Colonic mucosa (tissue), 4 donors: ENCODE measurements at regions of chr7 and their contacts with region 1.

Region 1: GRCh38 chr7:106736508-106737201 is 75.7 kb upstream of the CCDC71L start:
- DNase-seq: peak; percentile 41
- H3K4me3 ChIP-seq: no peak overlapping the region
- H3K27ac ChIP-seq: no peak overlapping the region
- H3K4me1 ChIP-seq: no peaks in the 10 kb centered on the region
- H3K27me3 ChIP-seq: no peaks in the 10 kb centered on the region
- CTCF ChIP-seq: peak; percentile 67

Region 2: DNA sequence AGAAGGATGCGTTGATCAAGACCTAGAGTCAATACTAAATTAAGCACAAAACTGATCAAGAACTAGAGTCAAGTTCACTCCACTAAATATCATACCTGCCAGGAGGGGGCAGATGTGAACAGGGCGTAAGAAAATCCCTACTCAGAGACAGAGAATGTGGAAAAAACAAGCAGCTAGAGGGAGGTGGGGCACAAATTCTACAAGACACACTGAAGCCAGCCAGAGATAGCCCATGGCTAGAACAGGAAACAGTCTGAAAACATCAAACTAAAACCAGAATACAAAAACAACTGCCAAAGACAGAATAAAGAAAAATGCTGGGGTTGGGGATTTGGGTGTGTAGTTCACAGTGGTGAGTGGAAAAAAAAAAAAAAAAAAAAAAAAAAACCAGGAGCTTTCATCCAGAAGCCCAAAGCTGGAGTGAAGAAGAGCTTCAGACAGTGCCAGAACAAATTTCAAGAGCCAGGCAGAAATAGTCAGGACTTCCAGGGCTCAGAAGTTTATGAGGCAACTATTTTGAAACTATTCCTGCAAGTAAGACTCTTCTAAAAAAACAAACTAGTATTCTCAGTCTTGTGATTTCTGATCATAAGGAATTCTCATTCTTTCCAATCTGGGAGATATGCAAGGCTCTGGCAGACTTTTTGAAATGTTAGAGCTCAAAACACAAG is 194.0 kb before region 1 on chr7:
- intact Hi-C with region 1: loop called (anchors 2 kb)
- DNase-seq: peak; percentile 75
- H3K4me3 ChIP-seq: no peak overlapping the region
- H3K27ac ChIP-seq: peak overlapping the region; percentile 29
- H3K4me1 ChIP-seq: no peaks in the 10 kb centered on the region
- H3K27me3 ChIP-seq: no peaks in the 10 kb centered on the region
- CTCF ChIP-seq: peak; percentile 38

Region 3: DNA sequence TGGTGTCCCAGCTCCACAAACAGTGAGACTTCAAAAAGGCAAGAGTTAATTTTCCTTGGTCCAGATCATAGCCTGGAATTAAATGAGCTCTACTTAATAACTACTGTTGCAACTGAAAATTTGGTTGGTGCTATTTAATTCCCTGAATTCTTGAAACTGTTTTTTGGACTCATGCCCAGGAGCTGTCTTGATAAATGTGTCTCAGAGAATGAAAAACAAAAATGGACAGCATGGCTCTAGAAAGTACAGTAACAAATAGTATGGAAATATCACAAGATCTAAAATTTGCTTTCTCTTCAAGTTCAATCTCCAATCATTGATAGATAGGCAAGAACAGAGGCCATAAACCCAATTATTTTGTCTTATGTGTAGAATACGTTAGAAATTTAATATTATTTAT is 118.2 kb before region 1 on chr7:
- intact Hi-C with region 1: no loop called
- DNase-seq: no peak
- H3K4me3 ChIP-seq: no peak overlapping the region
- H3K27ac ChIP-seq: no peak overlapping the region
- H3K4me1 ChIP-seq: no peaks in the 10 kb centered on the region
- H3K27me3 ChIP-seq: no peaks in the 10 kb centered on the region
- CTCF ChIP-seq: no peak

Region 4: DNA sequence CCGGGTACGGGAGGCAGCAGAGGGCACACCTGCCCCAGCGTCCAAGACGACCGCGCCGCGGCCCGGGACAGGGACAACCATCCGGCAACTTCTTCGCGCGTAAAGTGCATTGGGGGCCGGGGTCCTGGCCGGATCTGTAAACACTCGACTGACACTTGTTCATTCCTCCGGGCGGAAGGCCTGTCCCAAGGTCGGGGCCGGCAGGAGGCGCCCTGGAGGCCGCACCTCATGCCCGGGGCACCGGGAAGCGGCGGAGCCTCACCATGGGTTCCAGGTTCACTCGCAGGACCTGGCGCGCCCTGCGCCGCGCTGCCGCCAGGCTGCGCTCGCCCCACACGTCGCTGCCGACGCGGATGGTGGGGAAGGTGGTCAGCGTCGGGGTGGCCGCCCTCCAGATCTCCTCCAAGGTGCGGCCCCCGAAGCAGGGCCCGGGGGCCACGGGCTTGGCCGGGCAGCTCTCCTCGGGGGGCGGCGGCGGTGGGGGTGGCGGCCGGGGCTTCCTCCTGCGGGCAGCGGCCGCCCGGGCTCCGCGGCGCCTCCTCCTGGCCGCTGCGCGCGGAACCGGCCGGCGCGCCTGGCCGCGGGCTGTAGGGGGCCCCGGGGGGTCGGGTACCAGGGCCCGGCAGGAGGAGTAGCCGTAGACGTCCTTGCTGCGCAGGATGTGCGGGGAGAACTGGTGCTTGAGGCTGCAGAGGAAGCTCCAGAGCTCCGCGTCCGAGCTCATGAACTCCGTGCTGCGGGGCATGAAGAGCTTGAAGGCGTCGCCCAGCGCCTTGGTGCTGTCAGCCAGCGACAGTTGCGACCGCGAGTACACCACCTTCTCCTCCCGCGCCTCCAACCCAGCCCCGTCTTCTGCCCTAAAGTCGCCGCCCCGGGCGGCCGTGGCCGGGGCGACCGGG is 76.4 kb before region 1 on chr7:
- intact Hi-C with region 1: loop called (anchors 5 kb)
- DNase-seq: peak; percentile 81
- H3K4me3 ChIP-seq: peak overlapping the region; percentile 87
- H3K27ac ChIP-seq: peak overlapping the region; percentile 92
- H3K4me1 ChIP-seq: no peaks in the 10 kb centered on the region
- H3K27me3 ChIP-seq: no peaks in the 10 kb centered on the region
- CTCF ChIP-seq: peak; percentile 70